Dendritic cell treated with granulocyte-macrophage colony-stimulating factor and Interleukin-4, amounts not matched to agents 40 ng/mL and 50 ng/mL, for 4 days (primary cell): ENCODE measurements at regions of chr16 and their contacts with region 1.

Region 1: GRCh38 chr16:56600398-56600999 is 7.9 kb upstream of the MT2A start:
- H3K4me3 Mint-ChIP-seq: no peak overlapping the region
- H3K27ac Mint-ChIP-seq: no peak overlapping the region
- H3K4me1 Mint-ChIP-seq: no peaks in the 10 kb centered on the region
- H3K27me3 Mint-ChIP-seq: peaks cover 40% of the 10 kb centered on the region

Region 2: DNA sequence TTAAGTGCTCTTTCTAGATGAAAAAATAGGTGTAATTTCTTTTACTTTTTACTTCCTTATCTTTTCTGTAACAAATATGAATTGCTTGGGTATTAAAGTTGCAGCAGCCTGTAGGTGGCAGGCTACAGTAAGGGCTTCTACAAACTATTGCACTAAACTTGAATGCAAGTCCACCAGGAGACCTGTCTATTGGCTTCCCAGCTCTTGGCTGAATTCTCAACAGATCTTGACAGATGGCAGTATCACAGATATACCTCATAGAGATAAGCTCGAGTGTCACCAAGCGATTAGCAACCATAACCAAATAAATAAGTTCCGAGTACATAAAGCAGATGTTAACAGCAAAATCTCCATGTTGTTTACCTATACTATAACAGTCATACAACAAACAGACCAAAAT is 86.5 kb before region 1 on chr16:
- intact Hi-C with region 1: loop called (anchors 1 kb)
- H3K4me3 Mint-ChIP-seq: no peak overlapping the region
- H3K27ac Mint-ChIP-seq: no peak overlapping the region
- H3K4me1 Mint-ChIP-seq: peaks cover 13% of the 10 kb centered on the region
- H3K27me3 Mint-ChIP-seq: no peaks in the 10 kb centered on the region

Region 3: DNA sequence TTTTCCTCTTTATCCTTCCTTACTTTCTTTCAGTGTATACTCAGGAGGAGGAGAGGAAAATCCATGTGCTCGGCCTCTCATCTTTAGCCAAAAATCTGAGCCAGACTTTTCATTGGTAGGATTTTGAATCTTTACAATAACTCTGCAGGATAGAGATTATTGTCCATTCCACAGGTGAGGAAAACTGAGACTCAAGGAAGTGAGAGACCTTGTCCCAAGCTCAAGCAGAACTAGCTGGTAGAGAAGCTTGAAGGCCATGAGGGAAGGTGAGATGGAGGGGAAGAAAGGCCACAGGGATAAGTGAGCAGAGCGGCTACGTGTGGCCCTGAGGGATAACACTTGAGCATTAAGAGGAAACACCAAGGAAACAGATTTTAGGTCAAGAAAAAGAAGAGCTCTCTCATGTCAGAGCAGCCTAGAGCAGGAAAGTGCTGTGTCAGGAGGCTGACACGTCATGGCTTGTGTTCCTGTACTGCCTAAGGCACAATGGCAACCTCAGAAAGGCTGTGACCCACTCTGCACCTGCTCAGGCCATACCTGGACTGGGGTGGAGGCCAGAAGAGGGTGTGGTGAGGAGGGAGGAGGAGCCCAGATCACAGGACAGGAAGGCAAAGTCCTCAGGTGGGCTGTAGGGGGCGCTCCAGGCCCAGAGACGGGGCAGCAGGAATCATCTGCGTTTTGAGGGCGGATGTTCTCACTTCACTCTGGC is 23.8 kb before region 1 on chr16:
- intact Hi-C with region 1: loop called (anchors 1 kb)
- H3K4me3 Mint-ChIP-seq: no peak overlapping the region
- H3K27ac Mint-ChIP-seq: no peak overlapping the region
- H3K4me1 Mint-ChIP-seq: no peaks in the 10 kb centered on the region
- H3K27me3 Mint-ChIP-seq: peaks cover 15% of the 10 kb centered on the region

Region 4: GRCh38 chr16:56643080-56643778 is 42.7 kb after region 1 on chr16:
- intact Hi-C with region 1: no loop called
- H3K4me3 Mint-ChIP-seq: peak overlapping the region; percentile 64
- H3K27ac Mint-ChIP-seq: peak overlapping the region; percentile 28
- H3K4me1 Mint-ChIP-seq: peaks cover 23% of the 10 kb centered on the region
- H3K27me3 Mint-ChIP-seq: peaks cover 92% of the 10 kb centered on the region

Region 5: GRCh38 chr16:56667581-56668571 is 67.4 kb after region 1 on chr16 and contains the start of gene MT1G:
- intact Hi-C with region 1: no loop called
- H3K4me3 Mint-ChIP-seq: peak within 1 kb of the TSS; percentile 45
- H3K27ac Mint-ChIP-seq: no peak within 1 kb of the TSS
- H3K4me1 Mint-ChIP-seq: peaks cover 41% of the 10 kb centered on the region
- H3K27me3 Mint-ChIP-seq: peaks cover 88% of the 10 kb centered on the region